PC-9 (cell line): ENCODE measurements at regions of chr11 and their contacts with region 1.

Region 1: GRCh38 chr11:84714316-84714780 is 912.8 kb downstream of the DLG2 start:
- DNase-seq: peak; percentile 43 to 55
- H3K4me3 ChIP-seq: no peak overlapping the region
- H3K27ac ChIP-seq: no peak overlapping the region
- H3K4me1 ChIP-seq: no peaks in the 10 kb centered on the region
- H3K27me3 ChIP-seq: no peaks in the 10 kb centered on the region
- CTCF ChIP-seq: peak; percentile 63; the same call in 1 of the 2 replicates

Region 2: DNA sequence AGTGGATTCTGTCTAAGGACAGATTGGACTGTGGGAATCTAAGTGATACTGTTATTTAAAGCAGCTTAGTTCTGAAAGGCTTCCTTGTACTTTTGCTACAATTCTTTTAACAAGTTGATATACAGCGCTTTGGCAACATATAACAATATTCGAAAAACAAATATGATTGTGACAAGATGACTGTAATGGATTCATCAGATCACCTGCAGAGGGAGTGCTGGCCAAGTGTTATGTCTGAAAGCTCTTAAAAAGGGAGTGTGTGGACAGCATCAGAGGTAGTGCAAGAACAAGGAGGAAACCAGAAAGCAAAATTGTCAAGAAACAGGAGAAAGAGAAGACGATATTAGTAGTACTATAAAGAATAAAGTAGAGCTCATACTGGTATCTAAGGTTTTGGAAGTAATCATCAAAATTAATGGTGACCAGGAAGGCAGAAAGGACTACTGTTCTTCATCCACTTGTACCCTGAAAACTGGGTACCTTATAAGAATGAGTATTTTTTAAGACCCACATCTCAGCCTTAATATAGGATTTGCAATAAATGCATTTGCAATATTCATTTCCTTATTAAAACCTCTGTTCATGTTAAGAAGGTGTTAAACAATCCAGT is 316.2 kb before region 1 on chr11:
- CTCF ChIA-PET with region 1: no interaction called
- POLR2A ChIA-PET with region 1: no interaction called
- intact Hi-C with region 1: loop called (anchors 10 kb)
- DNase-seq: no peak
- H3K4me3 ChIP-seq: no peak overlapping the region
- H3K27ac ChIP-seq: no peak overlapping the region
- H3K4me1 ChIP-seq: no peaks in the 10 kb centered on the region
- H3K27me3 ChIP-seq: no peaks in the 10 kb centered on the region
- CTCF ChIP-seq: peak; percentile 54

Region 3: GRCh38 chr11:84558085-84558905 is 156.1 kb before region 1 on chr11:
- CTCF ChIA-PET with region 1: no interaction called
- POLR2A ChIA-PET with region 1: no interaction called
- intact Hi-C with region 1: loop called (anchors 2 kb)
- DNase-seq: peak in 1 of 2 experiments; percentile 19
- H3K4me3 ChIP-seq: no peak overlapping the region
- H3K27ac ChIP-seq: no peak overlapping the region
- H3K4me1 ChIP-seq: no peaks in the 10 kb centered on the region
- H3K27me3 ChIP-seq: no peaks in the 10 kb centered on the region
- CTCF ChIP-seq: peak; percentile 89